Activated CD4-positive, alpha-beta memory T cell treated with anti-CD3 and anti-CD28 coated beads, Interleukin-2, amount 10 ng/mL, durations not matched to agents 7 days and 5 days (primary cell): ENCODE measurements at regions of chr7 and their contacts with region 1.

Region 1: GRCh38 chr7:50229964-50230363 is 74.6 kb upstream of the IKZF1 start:
- DNase-seq: no peak
- H3K4me3 Mint-ChIP-seq: no peak overlapping the region
- H3K27ac Mint-ChIP-seq: no peak overlapping the region
- H3K4me1 Mint-ChIP-seq: peaks cover 42% of the 10 kb centered on the region
- H3K27me3 Mint-ChIP-seq: no peaks in the 10 kb centered on the region

Region 2: DNA sequence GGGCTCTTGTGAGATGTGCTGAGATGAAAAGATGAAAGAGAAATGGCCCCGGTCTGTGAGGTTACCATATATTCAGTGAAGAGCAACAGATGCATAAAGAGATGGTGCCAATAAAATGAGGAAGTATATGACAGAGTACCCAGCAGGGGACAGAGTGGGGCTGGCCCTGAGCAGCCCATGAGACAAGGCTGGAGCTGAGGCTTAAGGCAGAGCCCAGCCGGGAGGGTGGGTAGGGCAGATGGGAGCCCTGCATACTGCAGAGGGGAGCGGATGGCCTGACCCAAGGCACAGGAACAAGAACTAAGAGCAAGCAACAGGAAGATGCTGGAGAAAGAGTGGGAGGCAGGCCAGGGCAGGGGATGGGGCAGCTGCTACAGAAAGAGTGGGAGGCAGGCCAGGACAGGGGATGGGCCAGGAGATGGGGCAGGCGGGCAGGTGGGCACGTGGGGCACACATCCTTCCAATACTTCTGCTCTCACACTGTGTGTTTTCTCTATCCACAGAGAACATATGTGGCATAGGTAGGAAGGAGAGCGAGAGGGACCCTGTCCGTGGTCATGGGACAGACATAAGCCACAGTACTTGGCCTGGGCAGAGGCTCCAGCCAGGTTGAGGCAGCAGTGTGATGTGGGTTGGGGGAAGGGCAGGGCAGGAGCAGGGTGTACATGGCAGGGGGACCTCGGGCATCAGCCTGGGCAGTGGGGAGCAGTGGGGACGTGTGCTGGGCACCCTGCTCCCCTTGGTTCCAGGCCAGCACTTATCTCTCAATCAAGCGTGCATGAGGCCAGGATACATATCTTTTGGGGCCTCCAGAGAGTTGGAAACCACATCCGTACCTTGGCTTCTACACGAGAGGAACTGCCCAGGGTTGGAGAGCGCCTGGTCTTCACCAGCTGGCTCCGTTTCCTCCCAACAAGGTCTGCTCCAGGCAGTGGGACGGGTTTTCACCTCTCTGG is 17.0 kb before region 1 on chr7:
- CTCF ChIA-PET with region 1: interaction called, 32 read pairs
- POLR2A ChIA-PET with region 1: interaction called, 26 read pairs
- DNase-seq: peak; percentile 57
- H3K4me3 Mint-ChIP-seq: peak overlapping the region; percentile 15
- H3K27ac Mint-ChIP-seq: peak overlapping the region; percentile 83
- H3K4me1 Mint-ChIP-seq: peaks cover 91% of the 10 kb centered on the region
- H3K27me3 Mint-ChIP-seq: no peaks in the 10 kb centered on the region

Region 3: DNA sequence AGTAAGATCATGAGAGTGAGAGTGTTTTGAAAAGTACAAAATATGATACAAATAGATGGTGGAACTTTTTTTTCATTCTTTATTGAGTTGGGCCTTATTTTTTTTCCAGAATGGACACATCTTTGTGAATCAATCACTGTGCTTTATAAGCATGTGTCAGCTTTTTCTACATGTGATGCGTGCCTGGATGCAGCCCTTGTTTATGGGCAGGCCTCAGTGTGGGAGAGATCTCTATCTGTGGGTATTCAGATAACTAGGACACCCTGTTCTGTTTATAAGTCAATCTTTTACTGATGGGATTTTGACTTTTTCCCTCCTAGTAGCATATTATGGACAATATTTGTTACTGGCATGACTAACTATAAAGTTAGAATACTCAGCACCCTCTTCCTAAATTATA is 31.6 kb after region 1 on chr7:
- CTCF ChIA-PET with region 1: interaction called, 19 read pairs
- POLR2A ChIA-PET with region 1: interaction called, 42 read pairs
- DNase-seq: peak; percentile 62
- H3K4me3 Mint-ChIP-seq: peak overlapping the region; percentile 51
- H3K27ac Mint-ChIP-seq: peak overlapping the region; percentile 98
- H3K4me1 Mint-ChIP-seq: peaks cover 80% of the 10 kb centered on the region
- H3K27me3 Mint-ChIP-seq: no peaks in the 10 kb centered on the region

Region 4: GRCh38 chr7:50304158-50304910 is 74.4 kb after region 1 on chr7 and contains the start of gene IKZF1:
- CTCF ChIA-PET with region 1: interaction called, 10 read pairs
- POLR2A ChIA-PET with region 1: interaction called, 103 read pairs
- DNase-seq: peak; percentile 58
- H3K4me3 Mint-ChIP-seq: peak within 1 kb of the TSS; percentile 88
- H3K27ac Mint-ChIP-seq: peak within 1 kb of the TSS; percentile 99
- H3K4me1 Mint-ChIP-seq: peaks cover 29% of the 10 kb centered on the region
- H3K27me3 Mint-ChIP-seq: peaks cover 8% of the 10 kb centered on the region
- total RNA-seq, gene IKZF1: 383 to 404 TPM

Region 5: DNA sequence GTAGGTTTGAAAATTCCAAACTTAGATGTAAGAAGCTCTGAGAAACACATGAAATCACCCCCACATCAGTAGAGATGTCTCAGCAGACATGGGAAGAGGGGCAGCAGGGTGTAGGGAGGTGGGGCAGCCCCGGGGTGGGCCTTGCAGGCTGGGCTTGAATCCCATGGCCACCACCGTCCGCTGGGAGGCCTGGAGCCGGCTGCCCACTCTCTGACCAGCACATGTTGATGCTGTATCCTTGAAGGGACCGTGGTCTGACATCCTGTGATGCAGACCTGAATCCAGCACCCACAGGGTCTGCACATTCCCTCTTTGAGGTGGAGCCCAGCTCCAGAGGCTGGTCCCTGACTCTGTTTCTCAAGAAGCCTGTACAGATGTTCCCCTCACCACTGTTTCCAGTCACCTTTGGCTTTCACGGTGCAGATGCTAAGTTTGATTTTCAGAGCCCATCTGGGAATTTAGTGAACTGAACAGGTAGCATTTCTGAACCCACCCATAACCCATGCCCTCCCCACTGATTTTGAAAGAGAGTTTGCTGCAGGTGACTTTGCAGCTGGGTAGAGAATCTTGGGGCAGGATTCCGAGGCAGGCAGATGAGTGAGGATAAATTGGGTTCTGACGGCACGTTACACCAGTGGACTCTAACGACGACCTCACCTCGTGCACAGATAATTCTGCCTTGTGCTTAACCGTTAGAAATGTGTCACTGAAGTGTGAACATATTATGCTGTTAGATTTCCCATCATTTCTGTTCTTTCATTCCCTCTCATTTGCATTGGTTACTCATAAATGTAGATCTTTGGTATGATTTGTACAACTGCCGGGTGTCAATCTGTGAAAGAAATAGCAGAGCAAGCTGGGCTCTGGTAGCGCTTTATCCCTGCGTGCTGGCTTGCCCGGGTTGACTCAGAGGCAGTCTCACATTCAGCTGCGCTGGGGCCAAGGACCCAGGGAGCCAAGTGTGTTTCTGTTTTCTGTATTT is 120.3 kb after region 1 on chr7:
- CTCF ChIA-PET with region 1: no interaction called
- POLR2A ChIA-PET with region 1: interaction called, 13 read pairs
- DNase-seq: peak; percentile 87
- H3K4me3 Mint-ChIP-seq: peak overlapping the region; percentile 62
- H3K27ac Mint-ChIP-seq: peak overlapping the region; percentile 92
- H3K4me1 Mint-ChIP-seq: peaks cover 97% of the 10 kb centered on the region
- H3K27me3 Mint-ChIP-seq: no peaks in the 10 kb centered on the region